Right ventricle myocardium inferior (tissue), 1 donor: ENCODE measurements at regions of chr18 and their contacts with region 1.

Region 1: GRCh38 chr18:54269893-54270844 is 852 bp downstream of the POLI start:
- DNase-seq: no peak
- ATAC-seq: peak; percentile 50

Region 2: GRCh38 chr18:53771664-53772063 is 498.5 kb before region 1 on chr18:
- intact Hi-C with region 1: no loop called
- DNase-seq: no peak
- ATAC-seq: no peak

Region 3: GRCh38 chr18:54150226-54150625 is 119.9 kb before region 1 on chr18:
- intact Hi-C with region 1: loop called (anchors 10 kb)
- DNase-seq: no peak
- ATAC-seq: no peak

Region 4: DNA sequence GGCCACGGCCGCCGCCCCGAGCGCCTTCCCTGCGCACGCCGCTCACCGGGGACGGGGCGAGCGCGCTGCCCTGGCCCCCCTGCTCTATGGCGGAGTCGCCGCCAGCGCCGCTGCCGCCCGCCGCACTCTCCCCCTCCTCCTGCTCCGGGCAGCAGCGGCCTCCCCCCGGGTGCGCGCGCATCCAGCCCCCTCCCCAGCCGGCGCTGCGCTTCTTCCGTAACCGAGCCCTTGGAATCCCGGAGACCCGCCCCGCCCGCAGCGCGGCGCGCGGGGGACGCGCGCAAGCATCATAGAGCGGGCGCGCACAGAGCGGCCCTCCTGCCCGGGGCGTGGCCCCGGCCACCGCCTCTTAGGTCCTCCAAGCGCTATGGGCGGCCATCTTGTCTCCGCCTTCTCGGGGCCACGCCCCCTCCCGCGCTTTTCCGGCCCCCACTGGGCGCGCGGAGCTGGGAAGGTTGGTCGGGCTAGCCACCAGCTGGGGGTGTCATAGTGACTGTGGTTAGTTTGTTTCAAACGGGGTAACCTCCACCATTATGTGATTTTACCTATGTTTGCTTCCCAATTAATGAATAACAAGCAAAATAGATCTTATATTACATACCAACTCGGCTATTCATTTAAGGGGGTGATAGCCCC is 45.7 kb before region 1 on chr18 and contains the start of gene MBD2:
- intact Hi-C with region 1: loop called (anchors 1 kb)
- DNase-seq: peak; percentile 98
- ATAC-seq: peak; percentile 100
- total RNA-seq, gene MBD2: 45.1 TPM

Region 5: DNA sequence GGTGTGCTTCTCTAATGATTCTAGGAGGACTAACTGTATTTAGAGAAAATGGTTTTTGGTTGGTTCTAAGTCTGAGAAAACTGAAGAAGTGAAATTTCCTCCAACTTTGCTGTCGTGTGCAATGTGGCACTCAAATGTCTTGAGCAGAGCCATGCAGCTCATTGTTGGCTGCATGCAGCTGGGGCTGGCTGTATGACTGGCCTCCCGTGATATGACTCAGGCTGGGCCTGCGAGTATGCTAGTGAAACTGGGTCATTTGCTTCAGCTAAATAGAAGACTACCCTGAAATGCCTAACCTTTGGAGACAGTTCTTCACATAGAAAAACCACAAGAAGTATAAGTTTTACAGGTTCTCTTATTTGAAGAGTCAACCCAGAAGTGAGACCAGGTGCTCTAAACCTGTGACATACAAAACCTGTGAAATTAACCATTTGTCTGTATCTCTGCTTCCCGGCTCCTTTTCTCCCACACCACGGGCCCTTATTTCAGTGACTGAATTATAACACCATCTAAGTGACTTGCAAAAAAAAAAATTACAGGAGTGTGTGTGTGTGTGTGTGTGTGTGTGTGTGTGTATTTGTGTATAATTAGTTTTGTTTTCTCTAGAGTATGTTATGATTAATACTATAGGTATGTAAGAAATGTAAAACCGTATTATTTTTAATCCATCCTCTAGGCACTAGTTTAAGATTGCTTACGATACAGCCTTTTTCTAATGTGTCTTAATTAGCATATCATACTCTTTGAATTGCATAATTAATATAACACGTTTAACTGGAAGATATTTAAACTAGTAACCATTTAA is 15.0 kb after region 1 on chr18:
- intact Hi-C with region 1: no loop called
- DNase-seq: no peak
- ATAC-seq: peak; percentile 95